ENCODE measurements at regions of chr1 and their contacts with region 1.

Region 1: DNA sequence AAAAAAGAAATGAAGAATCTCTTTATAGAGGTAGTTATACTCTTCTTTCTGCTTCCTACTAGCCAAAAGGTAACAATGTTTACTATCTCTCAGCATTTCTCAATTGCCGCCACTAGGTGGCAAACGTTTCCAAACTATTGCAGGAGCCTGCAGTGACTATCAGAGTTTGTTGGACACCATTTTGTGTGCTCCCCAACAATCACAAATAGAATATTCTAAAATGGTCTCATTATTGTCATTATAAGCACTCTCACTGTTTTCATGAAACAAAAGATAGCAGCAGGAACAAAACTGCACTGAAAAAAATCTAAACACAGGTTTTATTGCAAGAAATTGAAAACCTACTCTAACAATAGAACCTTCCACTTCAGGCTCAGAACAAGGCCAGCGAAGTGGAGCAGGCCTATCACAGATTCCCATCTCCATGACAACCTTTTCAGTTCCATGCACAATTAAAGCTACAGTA is 83.9 kb upstream of the PLPPR4 start:
- DNase-seq: peak; percentile 79
- ATAC-seq: peak; percentile 84
- H3K4me3 Mint-ChIP-seq: no peak overlapping the region
- H3K27ac Mint-ChIP-seq: no peak overlapping the region
- H3K4me1 Mint-ChIP-seq: no peaks in the 10 kb centered on the region
- H3K27me3 Mint-ChIP-seq: peaks cover 2% of the 10 kb centered on the region

Region 2: DNA sequence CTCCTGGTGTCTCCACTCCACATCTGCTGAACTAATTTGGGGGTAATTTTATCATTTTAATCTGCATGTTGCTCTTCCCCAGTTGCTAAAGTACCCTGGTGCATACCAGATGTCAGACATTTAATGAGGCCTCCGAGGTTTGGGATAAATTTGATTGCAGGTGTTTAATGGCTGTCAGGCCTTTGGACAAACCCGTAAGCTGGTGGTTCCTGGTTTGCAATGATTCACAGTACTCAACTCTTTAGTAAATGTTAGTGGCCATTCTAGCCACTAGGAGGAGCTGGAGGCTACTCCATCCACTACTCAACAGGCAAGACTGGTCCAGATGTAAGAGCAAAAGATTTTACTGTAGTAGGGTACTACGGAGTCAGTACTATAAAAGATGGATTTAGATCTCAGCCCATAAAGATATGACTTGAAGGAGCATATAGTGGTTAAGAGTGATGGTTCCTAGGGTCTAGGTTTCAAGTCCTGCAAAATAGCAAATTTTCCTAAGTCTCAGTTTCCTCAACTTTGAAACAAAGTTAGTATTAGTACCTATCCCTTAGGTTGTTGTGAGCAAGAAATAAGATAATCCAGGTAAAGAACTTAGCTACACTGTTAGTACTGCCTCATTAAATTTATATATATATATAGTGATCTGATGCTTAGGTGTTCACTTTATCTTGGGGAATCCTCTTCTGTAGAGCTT is 386.0 kb before region 1 on chr1:
- CTCF ChIA-PET with region 1: interaction called, 11 read pairs
- POLR2A ChIA-PET with region 1: no interaction called
- DNase-seq: peak; percentile 67
- ATAC-seq: peak; percentile 86
- H3K4me3 Mint-ChIP-seq: no peak overlapping the region
- H3K27ac Mint-ChIP-seq: no peak overlapping the region
- H3K4me1 Mint-ChIP-seq: peaks cover 22% of the 10 kb centered on the region
- H3K27me3 Mint-ChIP-seq: peaks cover 6% of the 10 kb centered on the region

Region 3: DNA sequence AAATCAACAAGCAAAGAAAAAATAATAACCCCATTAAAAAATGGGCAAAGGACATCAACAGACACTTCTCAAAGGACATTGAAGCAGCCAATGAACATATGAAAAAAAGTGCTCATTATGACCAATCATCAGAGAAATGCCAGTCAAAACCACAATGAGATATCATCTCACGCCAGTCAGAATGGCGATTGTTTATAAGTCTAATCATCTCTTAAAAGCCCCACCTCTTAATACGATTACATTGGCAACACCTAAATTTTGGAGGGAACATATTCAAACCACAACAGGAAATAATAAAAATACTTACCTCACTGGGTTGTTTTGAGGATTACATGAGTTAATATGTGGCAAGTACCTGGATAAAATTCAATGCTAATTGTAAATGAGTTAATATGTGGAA is 26.8 kb after region 1 on chr1:
- CTCF ChIA-PET with region 1: no interaction called
- POLR2A ChIA-PET with region 1: no interaction called
- DNase-seq: no peak
- ATAC-seq: no peak
- H3K4me3 Mint-ChIP-seq: no peak overlapping the region
- H3K27ac Mint-ChIP-seq: no peak overlapping the region
- H3K4me1 Mint-ChIP-seq: no peaks in the 10 kb centered on the region
- H3K27me3 Mint-ChIP-seq: no peaks in the 10 kb centered on the region

Region 4: DNA sequence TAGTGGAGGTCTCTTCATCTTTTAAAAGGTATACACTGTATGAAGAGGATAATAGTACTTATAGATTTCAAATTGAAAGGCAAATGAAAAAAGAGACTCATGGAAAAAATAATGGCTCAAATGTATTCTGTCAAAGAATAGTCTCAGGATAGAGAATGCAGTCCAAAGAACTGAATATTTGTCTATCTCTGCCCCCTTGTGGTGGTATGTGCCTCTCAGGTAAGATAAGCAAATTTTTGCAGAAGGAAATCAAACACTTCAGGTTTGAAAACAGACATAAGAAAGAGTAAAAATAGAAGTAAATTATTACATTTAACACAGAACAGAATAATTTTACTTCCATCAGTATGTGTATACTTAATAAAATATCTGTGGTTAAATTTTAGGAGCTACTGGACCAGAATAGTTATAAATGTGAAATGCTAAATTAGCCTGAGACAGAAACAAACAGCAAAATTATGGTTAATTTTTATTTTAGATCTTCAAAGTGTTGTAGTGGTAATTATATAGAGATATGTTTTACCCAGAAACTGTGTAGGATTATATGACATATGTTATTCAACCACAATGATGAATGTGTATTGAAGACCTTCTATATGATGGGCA is 301.1 kb after region 1 on chr1:
- CTCF ChIA-PET with region 1: interaction called, 14 read pairs
- POLR2A ChIA-PET with region 1: no interaction called
- DNase-seq: peak; percentile 61
- ATAC-seq: no peak
- H3K4me3 Mint-ChIP-seq: no peak overlapping the region
- H3K27ac Mint-ChIP-seq: no peak overlapping the region
- H3K4me1 Mint-ChIP-seq: no peaks in the 10 kb centered on the region
- H3K27me3 Mint-ChIP-seq: peaks cover 17% of the 10 kb centered on the region

Region 5: DNA sequence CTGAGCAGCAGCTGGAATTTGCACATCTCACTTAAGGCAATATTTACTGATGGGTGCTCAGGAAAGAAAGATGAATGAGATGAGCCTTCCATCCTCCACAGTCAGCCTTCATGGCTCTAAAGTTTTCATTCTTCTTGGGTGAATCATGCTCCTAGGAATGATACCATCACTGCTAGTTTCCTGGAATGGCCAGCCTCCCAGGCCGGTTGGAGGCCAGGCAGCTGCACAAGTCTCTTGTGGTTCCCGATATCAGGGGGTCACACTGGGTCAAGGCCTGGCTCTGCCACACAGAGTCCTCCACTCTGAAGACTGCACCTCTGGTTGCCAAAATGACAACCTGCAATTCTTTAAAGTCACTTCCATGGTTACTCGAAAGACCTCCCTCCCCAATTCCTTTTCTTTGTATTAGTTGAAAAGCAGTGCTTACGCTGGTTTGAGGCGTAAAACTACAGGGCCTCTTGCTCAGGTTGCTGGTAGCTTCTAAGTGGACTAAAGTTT is 419.4 kb after region 1 on chr1:
- CTCF ChIA-PET with region 1: no interaction called
- POLR2A ChIA-PET with region 1: no interaction called
- DNase-seq: no peak
- ATAC-seq: no peak
- H3K4me3 Mint-ChIP-seq: no peak overlapping the region
- H3K27ac Mint-ChIP-seq: no peak overlapping the region
- H3K4me1 Mint-ChIP-seq: no peaks in the 10 kb centered on the region
- H3K27me3 Mint-ChIP-seq: no peaks in the 10 kb centered on the region